ENCODE measurements at regions of chr2 and their contacts with region 1.

Region 1: DNA sequence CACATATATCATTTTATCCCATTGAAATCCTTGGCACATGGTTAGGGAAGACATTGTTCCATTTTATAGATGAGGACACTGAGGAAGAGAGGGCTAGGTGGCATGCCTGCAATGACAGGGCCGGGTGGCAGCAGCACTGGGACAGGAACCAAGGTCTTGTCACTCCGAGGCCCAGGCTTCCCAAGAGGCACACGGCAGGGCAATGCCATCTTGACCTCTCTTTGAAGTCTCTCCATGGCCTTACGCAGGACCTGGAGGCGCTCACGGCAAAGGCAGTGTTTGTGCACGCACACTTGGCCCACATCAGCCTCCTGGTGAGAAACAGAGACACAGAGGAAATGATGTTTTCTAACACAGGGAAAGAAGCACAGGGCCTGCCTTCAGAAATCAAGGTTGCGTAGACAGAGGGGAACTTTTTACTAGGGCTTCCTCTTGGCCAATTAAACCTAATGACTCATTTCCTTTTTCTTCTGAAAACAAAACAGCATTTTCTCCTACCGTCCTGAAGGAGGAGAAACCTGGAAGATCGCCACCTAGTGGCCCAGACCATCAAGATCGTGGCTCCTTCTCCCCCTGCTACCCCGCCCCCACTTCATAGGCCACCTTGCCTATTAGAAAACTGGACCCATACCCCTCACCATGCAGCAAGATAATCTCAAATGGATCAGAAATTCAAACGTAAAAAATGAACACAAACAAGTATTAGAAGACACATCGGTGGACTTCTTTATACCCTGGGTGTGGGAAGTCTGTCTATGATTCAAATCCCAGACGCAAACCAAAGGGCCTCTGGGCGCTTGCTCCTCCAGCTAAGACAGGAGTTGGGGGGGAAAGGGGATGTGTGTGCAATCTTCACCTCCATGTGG is 74.6 kb upstream of the SP3 start:
- DNase-seq: peak; percentile 72
- H3K4me3 Mint-ChIP-seq: peak overlapping the region; percentile 40
- H3K27ac Mint-ChIP-seq: peak overlapping the region; percentile 89
- H3K4me1 Mint-ChIP-seq: peaks cover 16% of the 10 kb centered on the region
- H3K27me3 Mint-ChIP-seq: no peaks in the 10 kb centered on the region

Region 2: DNA sequence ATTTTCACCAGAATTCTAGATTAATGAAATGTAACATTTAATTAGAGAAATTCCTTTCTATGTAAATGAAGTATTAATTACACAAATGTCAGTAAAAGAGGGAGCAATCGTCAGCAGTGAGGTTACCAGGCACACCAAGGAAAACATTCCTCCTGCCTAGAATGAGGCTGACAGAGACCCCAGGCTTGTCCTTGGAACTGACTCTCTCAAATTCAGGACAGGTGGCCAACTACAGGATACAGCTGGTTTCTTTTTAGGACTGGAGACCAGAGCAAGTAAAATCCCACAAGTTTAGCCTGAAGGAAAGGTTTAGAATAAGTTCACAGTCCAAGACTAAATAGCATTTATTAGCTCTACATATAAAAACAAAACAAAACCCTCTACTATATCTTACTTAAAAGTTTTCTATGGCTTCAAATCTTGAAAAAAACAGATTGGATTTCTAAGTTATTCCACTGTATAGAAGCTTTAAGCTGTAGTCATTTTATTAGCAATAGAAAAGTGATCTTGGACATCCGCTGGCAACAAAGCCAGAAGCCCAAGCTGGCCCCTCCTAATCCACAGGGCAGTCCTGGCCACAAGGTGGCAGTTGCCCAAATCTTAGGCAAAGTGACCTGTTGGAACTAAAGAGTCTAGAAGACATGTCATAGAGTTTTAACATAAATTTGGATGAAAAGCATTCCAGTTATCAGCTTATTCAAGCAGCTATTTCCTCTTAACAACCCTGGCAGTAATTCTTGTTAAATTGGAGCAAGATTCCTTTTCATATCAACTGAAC is 155.6 kb before region 1 on chr2:
- intact Hi-C with region 1: loop called (anchors 10 kb)
- DNase-seq: no peak
- H3K4me3 Mint-ChIP-seq: no peak overlapping the region
- H3K27ac Mint-ChIP-seq: no peak overlapping the region
- H3K4me1 Mint-ChIP-seq: no peaks in the 10 kb centered on the region
- H3K27me3 Mint-ChIP-seq: peaks cover 13% of the 10 kb centered on the region

Region 3: DNA sequence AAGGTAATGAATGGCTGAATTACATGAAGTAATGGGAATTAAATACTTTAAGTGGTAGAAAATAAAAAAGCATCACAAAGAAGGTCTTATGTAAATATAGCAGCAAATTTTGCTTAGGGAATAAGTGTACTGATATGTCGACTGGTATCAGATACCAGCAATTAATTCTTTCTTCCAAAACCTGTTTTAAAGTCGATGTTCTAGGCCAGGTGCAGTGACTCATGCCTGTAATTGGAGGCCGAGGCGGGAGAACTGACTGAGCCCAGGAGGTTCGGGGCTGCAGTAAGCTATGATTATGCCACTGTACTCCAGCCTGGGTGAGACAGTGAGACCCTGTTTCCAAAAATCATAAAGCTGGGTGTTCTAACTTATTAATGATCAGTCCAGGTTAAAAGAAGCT is 104.9 kb before region 1 on chr2:
- intact Hi-C with region 1: no loop called
- DNase-seq: no peak
- H3K4me3 Mint-ChIP-seq: no peak overlapping the region
- H3K27ac Mint-ChIP-seq: peak overlapping the region; percentile 4
- H3K4me1 Mint-ChIP-seq: peaks cover 17% of the 10 kb centered on the region
- H3K27me3 Mint-ChIP-seq: no peaks in the 10 kb centered on the region

Region 4: GRCh38 chr2:174023591-174024523 is 15.9 kb before region 1 on chr2:
- intact Hi-C with region 1: loop called (anchors 1 kb)
- DNase-seq: no peak
- H3K4me3 Mint-ChIP-seq: no peak overlapping the region
- H3K27ac Mint-ChIP-seq: no peak overlapping the region
- H3K4me1 Mint-ChIP-seq: no peaks in the 10 kb centered on the region
- H3K27me3 Mint-ChIP-seq: no peaks in the 10 kb centered on the region

Measured in activated T-helper 1 cell treated with anti-CD3 and anti-CD28 coated beads, Interleukin-12 subunit alpha, Interleukin-12 subunit beta, Interleukin-2, Interleukin-4 antibody, amounts not matched to agents 30 ng/mL and 10 ng/mL and 1 ng/mL, durations not matched to agents 14 hours and 24 hours and 36 hours (primary cell).